Activated CD8-positive, alpha-beta T cell treated with anti-CD3 and anti-CD28 coated beads for 36 hours (primary cell): ENCODE measurements at regions of chr5 and their contacts with region 1.

Region 1: GRCh38 chr5:69042915-69043658 is 50.7 kb upstream of the SLC30A5 start:
- DNase-seq: peak; percentile 83
- ATAC-seq: peak; percentile 95
- H3K4me3 Mint-ChIP-seq: peak overlapping the region; percentile 84
- H3K27ac Mint-ChIP-seq: peak overlapping the region; percentile 96
- H3K4me1 Mint-ChIP-seq: peaks cover 14% of the 10 kb centered on the region
- H3K27me3 Mint-ChIP-seq: no peaks in the 10 kb centered on the region
- CTCF ChIP-seq: peak; percentile 77

Region 2: DNA sequence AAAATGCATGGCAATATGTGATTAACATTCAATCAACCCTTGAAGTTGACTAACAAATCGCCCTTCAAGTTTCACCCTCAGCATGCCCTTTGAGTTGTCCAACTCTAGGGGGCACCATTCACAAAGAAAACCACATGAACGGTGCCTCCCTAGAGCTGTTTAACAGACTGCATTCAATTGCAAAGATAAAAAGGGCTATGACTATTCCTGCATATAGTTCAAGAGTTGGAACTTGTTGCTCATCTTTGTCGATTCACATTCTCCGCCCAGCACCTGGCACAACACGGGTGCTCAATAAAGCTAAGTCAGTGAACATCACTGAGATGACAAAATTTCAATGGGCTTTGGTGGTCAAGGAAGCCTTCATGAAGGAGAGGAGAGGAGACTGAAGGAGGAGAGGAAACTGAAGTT is 18.8 kb before region 1 on chr5:
- CTCF ChIA-PET with region 1: interaction called, 12 read pairs
- POLR2A ChIA-PET with region 1: no interaction called
- intact Hi-C with region 1: no loop called
- DNase-seq: peak; percentile 24
- ATAC-seq: peak; percentile 84
- H3K4me3 Mint-ChIP-seq: no peak overlapping the region
- H3K27ac Mint-ChIP-seq: no peak overlapping the region
- H3K4me1 Mint-ChIP-seq: no peaks in the 10 kb centered on the region
- H3K27me3 Mint-ChIP-seq: peaks cover 3% of the 10 kb centered on the region
- CTCF ChIP-seq: peak; percentile 72

Region 3: DNA sequence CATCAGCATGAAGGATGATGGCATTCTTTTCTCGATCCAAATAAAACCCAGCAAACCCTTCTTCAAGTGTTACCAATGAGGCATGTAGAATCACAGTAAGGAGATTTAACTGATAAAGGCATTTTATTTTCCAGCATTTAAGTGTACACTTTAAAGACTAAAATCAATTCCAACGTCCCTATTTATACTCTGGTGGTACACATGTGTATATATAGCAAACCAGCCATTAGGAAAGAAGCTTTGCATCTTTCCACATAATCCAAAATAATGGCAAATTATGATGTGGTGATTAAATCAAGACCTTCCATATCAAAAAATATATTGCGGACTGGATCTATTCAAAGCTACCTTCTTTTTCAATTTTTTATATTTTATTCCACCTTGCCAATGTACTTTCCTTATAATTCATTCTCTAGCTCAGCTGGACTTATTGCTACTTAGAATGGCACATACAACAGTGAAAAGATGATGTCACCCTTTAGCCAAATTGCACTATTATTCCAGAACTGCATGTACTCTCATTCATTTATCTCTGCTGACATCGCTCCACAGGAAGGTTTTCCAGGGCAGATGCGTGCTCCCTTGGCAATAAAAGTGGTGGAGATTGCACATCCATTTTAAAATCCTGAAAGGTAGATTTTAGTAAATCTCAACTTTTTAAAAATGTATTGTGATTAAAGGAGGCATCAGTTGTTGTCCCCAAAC is 12.6 kb before region 1 on chr5:
- CTCF ChIA-PET with region 1: interaction called, 12 read pairs
- POLR2A ChIA-PET with region 1: no interaction called
- intact Hi-C with region 1: no loop called
- DNase-seq: no peak
- ATAC-seq: no peak
- H3K4me3 Mint-ChIP-seq: no peak overlapping the region
- H3K27ac Mint-ChIP-seq: no peak overlapping the region
- H3K4me1 Mint-ChIP-seq: no peaks in the 10 kb centered on the region
- H3K27me3 Mint-ChIP-seq: peaks cover 2% of the 10 kb centered on the region
- CTCF ChIP-seq: no peak

Region 4: DNA sequence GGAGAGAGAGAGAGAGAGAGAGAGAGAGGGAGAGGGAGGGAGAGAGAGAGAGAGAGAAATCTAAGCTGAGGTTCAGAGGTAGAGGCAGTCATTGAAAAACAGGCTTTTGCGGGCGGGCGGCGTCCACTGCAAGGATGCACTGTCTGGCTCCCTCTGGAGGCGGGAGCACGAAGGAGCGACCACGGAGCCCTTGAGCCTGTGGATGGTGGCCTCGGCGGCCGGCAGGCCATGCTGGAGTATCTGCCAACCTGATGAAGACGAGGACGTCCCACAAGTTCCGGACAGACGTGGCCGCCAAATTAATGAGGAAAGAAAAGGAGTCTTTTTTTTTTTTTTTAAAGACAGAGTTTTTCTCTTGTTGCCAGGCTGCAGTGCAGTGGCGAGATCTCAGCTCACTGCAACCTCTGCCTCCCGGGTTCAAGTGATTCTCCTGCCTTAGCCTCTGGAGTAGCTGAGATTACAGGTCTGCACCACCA is 291.7 kb after region 1 on chr5:
- CTCF ChIA-PET with region 1: interaction called, 12 read pairs
- POLR2A ChIA-PET with region 1: no interaction called
- intact Hi-C with region 1: loop called (anchors 5 kb)
- DNase-seq: peak; percentile 90
- ATAC-seq: peak; percentile 85
- H3K4me3 Mint-ChIP-seq: no peak overlapping the region
- H3K27ac Mint-ChIP-seq: peak overlapping the region; percentile 22
- H3K4me1 Mint-ChIP-seq: peaks cover 12% of the 10 kb centered on the region
- H3K27me3 Mint-ChIP-seq: no peaks in the 10 kb centered on the region
- CTCF ChIP-seq: peak; percentile 71

Region 5: GRCh38 chr5:69369369-69370121 is 326.5 kb after region 1 on chr5 and contains the starts of genes AK6, RAD17 and TAF9:
- CTCF ChIA-PET with region 1: interaction called, 3 read pairs
- POLR2A ChIA-PET with region 1: no interaction called
- intact Hi-C with region 1: loop called (anchors 2 kb)
- DNase-seq: peak; percentile 97
- ATAC-seq: peak; percentile 95
- H3K4me3 Mint-ChIP-seq: peak within 1 kb of the TSS; percentile 89
- H3K27ac Mint-ChIP-seq: peak within 1 kb of the TSS; percentile 100
- H3K4me1 Mint-ChIP-seq: peaks cover 40% of the 10 kb centered on the region
- H3K27me3 Mint-ChIP-seq: no peaks in the 10 kb centered on the region
- CTCF ChIP-seq: no peak
- total RNA-seq, gene AK6: 95.7 to 107 TPM
- total RNA-seq, gene RAD17: 22.9 to 26.5 TPM
- total RNA-seq, gene TAF9: 68.8 to 70.6 TPM